Esophagus muscularis mucosa (tissue), 4 donors: ENCODE measurements at regions of chr6 and their contacts with region 1.

Region 1: GRCh38 chr6:157323255-157323965 is at the start of gene TMEM242:
- DNase-seq: peak; percentile 97
- H3K4me3 ChIP-seq: peak within 1 kb of the TSS; percentile 62 to 95 (median 84)
- H3K27ac ChIP-seq: peak within 1 kb of the TSS; percentile 91 to 96 (median 93)
- H3K4me1 ChIP-seq: peaks cover 19 to 30% (median 22%) of the 10 kb centered on the region in 4 donors
- H3K27me3 ChIP-seq: no peaks in the 10 kb centered on the region
- CTCF ChIP-seq: peak in 2 of 3 experiments; percentile 18 to 45
- EP300 ChIP-seq: no peak
- POLR2A ChIP-seq: peak; percentile 59
- total RNA-seq, gene TMEM242: 6.1 to 10.1 (median 8.0) TPM

Region 2: GRCh38 chr6:157379656-157380454 is 56.4 kb after region 1 on chr6:
- intact Hi-C with region 1: loop called (anchors 2 kb)
- DNase-seq: peak; percentile 98
- H3K4me3 ChIP-seq: peak overlapping the region; percentile 96 to 100 (median 98)
- H3K27ac ChIP-seq: peak overlapping the region; percentile 94 to 97 (median 96)
- H3K4me1 ChIP-seq: peaks cover 15 to 24% (median 20%) of the 10 kb centered on the region in 4 donors
- H3K27me3 ChIP-seq: no peaks in the 10 kb centered on the region
- CTCF ChIP-seq: no peak
- EP300 ChIP-seq: no peak
- POLR2A ChIP-seq: no peak

Region 3: DNA sequence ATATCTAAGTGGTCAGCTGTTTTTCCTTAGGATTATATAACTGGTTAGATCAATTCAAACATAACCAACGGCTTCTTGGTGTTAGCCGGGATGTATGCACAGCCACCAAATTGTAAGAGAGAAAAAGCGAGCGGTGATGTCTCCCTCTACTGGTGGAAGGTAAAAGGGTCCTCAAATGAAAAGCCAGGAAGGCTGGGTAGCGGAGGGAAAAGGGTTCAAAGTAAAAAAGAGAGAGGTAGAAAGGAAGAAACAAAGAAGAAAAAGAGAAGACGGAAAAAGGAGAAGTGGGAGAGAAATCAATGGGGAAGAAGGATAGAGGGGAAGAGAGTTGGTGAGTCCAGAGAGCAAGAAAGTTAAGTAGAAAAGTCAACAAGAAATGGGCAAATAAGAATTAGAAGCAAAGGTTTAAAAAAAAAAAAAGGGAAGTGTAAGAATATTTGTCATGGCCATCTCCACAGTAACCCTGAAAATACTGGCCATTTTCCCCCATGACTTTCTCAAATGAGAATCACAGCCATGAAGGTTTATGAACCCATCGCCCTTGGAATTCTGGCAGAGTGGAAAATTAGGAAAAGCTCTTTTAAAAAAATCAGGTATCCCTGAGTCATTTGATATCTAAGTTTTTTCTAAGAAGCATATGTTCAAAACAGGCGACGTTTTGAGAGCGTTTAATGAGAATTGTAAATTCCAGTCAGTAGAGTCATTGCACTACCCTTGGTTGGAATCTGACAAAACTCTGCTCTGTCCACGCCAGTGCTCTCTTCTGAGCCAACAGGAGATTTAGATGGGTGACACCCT is 344.0 kb after region 1 on chr6:
- intact Hi-C with region 1: loop called (anchors 5 kb)
- DNase-seq: no peak
- H3K4me3 ChIP-seq: no peak overlapping the region
- H3K27ac ChIP-seq: no peak overlapping the region
- H3K4me1 ChIP-seq: peaks cover 14 to 37% (median 27%) of the 10 kb centered on the region in 4 donors
- H3K27me3 ChIP-seq: no peaks in the 10 kb centered on the region
- CTCF ChIP-seq: peak; percentile 76 to 87 (median 79)
- EP300 ChIP-seq: no peak
- POLR2A ChIP-seq: no peak